OCI-LY7 (cell line): ENCODE measurements at regions of chr12 and their contacts with region 1.

Region 1: DNA sequence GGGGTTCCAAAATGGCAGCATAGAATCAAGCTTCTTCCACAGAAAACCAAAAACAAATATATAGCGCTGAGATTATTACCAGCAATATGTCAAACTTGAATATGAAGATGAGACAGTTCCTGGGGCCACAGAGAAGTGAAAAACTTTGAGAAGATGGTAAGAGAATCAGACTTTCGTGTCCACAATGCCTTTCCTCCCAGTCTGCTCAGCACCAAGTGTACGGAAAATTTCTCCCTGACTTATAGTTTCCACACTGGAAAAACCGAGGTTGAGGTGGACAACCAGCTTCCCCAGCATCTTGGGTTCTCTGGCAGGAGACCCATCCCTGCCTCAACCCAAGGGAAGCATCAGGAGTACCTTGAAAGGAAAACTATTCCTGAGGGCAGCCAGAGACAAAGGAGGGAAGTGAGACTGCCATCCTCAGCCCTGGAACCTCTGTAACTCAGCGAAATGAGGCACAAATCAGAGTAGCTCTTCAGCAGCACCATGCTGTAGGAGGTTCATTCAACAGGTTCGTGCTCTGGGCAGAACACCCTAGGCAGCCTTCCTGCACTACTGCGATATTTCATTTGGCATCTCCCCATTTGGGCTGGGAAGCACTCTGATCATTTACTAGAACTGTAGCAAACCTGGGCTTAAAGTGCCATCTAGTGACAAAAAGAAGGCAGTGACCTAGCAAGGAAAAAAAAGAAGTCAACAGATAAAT is 52.4 kb upstream of the CAPRIN2 start:
- DNase-seq: peak; percentile 63
- H3K4me3 ChIP-seq: no peak overlapping the region
- H3K27ac ChIP-seq: no peak overlapping the region
- H3K4me1 ChIP-seq: no peaks in the 10 kb centered on the region
- CTCF ChIP-seq: peak; percentile 93

Region 2: DNA sequence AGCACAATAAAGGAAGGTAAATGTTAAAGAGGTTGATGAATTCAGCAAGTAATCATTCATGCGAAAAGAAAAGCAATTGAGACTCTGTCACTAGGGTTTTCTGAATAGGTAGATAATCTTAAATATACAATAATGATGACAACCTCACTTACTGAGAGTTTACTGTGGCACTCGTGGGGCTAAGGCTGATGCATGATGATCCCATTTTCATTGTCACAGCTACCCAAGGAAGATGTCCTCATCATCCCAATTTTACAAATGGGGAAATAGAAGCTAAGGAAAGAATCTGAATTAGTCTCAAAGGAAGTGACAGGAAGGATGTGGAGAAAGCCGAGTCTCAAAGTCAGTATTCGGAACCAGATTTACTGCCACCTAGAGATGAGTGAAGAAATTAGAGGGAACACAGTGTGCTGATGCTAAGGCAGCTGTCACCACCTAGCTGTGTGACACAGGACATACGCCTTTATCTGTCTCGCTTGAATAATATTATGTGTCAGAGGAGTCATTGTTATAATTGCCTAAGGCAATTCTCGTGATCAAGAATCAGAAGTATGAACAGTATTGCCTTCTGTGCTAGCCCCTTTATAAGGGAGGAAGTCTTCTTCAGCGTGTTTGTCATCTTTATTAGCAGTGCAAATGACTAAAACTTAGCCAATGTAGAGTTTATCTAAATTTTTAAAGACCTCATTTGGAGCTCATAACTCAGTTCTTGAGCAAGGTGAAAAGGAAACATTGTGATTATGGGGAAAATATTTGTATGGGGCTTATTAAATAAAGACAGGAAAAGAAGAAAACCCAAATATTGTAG is 1489.4 kb before region 1 on chr12:
- CTCF ChIA-PET with region 1: no interaction called
- POLR2A ChIA-PET with region 1: no interaction called
- intact Hi-C with region 1: loop called (anchors 10 kb)
- DNase-seq: peak; percentile 75
- H3K4me3 ChIP-seq: no peak overlapping the region
- H3K27ac ChIP-seq: no peak overlapping the region
- H3K4me1 ChIP-seq: peaks cover 3% of the 10 kb centered on the region
- CTCF ChIP-seq: peak; percentile 95

Region 3: GRCh38 chr12:29519585-29520182 is 1287.5 kb before region 1 on chr12:
- CTCF ChIA-PET with region 1: no interaction called
- POLR2A ChIA-PET with region 1: no interaction called
- intact Hi-C with region 1: loop called (anchors 1 kb)
- DNase-seq: peak; percentile 44
- H3K4me3 ChIP-seq: no peak overlapping the region
- H3K27ac ChIP-seq: no peak overlapping the region
- H3K4me1 ChIP-seq: no peaks in the 10 kb centered on the region
- CTCF ChIP-seq: peak; percentile 89

Region 4: GRCh38 chr12:29552324-29552927 is 1254.7 kb before region 1 on chr12:
- CTCF ChIA-PET with region 1: no interaction called
- POLR2A ChIA-PET with region 1: no interaction called
- intact Hi-C with region 1: loop called (anchors 2 kb)
- DNase-seq: peak; percentile 42
- H3K4me3 ChIP-seq: no peak overlapping the region
- H3K27ac ChIP-seq: no peak overlapping the region
- H3K4me1 ChIP-seq: no peaks in the 10 kb centered on the region
- CTCF ChIP-seq: peak; percentile 88

Region 5: GRCh38 chr12:30754709-30755394 is 52.3 kb before region 1 on chr12 and contains the start of gene CAPRIN2:
- CTCF ChIA-PET with region 1: no interaction called
- POLR2A ChIA-PET with region 1: no interaction called
- intact Hi-C with region 1: loop called (anchors 1 kb)
- DNase-seq: peak; percentile 94
- H3K4me3 ChIP-seq: peak within 1 kb of the TSS; percentile 89
- H3K27ac ChIP-seq: peak within 1 kb of the TSS; percentile 24
- H3K4me1 ChIP-seq: peaks cover 25% of the 10 kb centered on the region
- CTCF ChIP-seq: peak; percentile 61
- total RNA-seq, gene CAPRIN2: 21.7 and 23.8 TPM in 2 replicates

Region 6: GRCh38 chr12:30822385-30823155 is 15.4 kb after region 1 on chr12:
- CTCF ChIA-PET with region 1: no interaction called
- POLR2A ChIA-PET with region 1: interaction called, 13 read pairs
- intact Hi-C with region 1: no loop called
- DNase-seq: no peak
- H3K4me3 ChIP-seq: no peak overlapping the region
- H3K27ac ChIP-seq: no peak overlapping the region
- H3K4me1 ChIP-seq: no peaks in the 10 kb centered on the region
- CTCF ChIP-seq: no peak